Gastrocnemius medialis (tissue), 4 donors: ENCODE measurements at regions of chr5 and their contacts with region 1.

Region 1: DNA sequence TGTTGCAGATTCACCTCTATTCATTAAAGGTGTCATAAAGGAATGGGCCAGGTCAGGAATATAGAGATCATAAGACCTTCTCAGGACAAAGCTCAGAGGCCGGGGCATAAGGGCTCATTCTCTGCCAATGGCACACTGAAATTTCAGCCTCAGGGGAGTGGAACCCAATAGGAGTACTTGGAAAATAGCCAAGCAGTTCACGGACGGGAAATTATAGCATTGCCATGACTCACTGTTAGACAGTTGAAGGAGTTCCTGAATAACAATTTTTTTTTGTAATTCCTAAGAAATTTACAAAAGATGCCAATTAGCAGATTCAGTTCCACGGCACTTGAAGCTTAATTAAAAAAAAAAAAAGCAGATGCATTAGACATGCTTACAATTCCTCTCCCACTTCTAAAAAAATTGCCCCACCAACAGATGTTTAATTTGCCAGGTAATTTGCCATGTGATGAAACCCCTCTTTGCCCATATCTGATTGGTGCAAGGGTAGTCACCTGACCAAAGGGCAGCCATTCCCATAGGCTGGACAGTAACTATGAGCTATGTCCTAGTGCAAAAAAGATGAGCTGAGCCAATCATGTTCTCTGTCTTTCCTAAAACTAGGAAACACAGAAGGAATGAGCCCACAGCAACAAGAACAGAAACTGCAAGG is 58.6 kb downstream of the PTCD2 start:
- DNase-seq: peak; percentile 69 to 78
- ATAC-seq: peak; percentile 86 to 88
- H3K4me3 ChIP-seq: no peak overlapping the region
- H3K27ac ChIP-seq: peak overlapping the region; percentile 62 to 81 (median 76)
- H3K4me1 ChIP-seq: peaks cover 23 to 30% of the 10 kb centered on the region in 2 donors
- H3K27me3 ChIP-seq: no peaks in the 10 kb centered on the region
- CTCF ChIP-seq: no peak
- POLR2A ChIP-seq: no peak

Region 2: GRCh38 chr5:72441861-72442540 is 63.2 kb after region 1 on chr5:
- in situ Hi-C with region 1: loop called in 1 of 4 experiments (anchors 10 kb)
- intact Hi-C with region 1: no loop called
- DNase-seq: no peak
- ATAC-seq: peak; percentile 41 to 43
- H3K4me3 ChIP-seq: no peak overlapping the region
- H3K27ac ChIP-seq: peak overlapping the region; percentile 33 to 61 (median 46)
- H3K4me1 ChIP-seq: peaks cover 52 to 53% of the 10 kb centered on the region in 2 donors
- H3K27me3 ChIP-seq: no peaks in the 10 kb centered on the region
- CTCF ChIP-seq: no peak
- POLR2A ChIP-seq: no peak

Region 3: DNA sequence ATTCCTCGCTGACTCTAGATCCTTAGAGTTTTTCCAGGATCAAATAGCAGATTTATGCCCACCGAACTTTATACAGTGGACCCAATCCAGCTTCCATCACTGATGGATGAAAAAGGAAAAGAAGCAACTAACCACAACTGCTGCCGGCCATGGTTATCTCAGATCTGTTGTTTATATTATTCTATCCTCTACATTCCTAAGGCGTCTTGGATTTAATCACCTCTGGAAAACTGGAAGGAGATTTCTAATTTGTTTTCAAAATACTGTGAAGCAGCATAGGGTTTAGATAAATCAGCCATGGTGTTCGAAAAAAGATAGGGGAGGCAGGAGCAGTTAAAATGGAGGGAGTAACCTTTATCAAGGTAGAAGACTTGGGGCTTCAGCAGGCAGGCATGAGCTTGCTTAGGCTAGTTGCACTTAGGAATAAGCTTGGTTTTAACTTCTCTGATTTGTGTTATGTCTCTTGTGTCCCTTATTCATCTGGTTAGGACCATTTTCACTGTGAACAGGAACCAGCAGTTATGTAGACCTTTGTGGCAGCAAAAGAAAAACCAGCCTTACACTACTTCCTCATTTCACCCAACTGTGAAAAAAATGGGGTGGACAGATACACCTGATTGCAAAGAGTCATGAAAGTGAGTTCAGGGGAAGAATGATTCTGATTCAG is 129.3 kb after region 1 on chr5:
- in situ Hi-C with region 1: no loop called
- intact Hi-C with region 1: loop called (anchors 5 kb)
- DNase-seq: no peak
- ATAC-seq: no peak
- H3K4me3 ChIP-seq: peak overlapping the region in 1 of 4 donors; percentile 45
- H3K27ac ChIP-seq: peak overlapping the region; percentile 67 to 82 (median 76)
- H3K4me1 ChIP-seq: peaks cover 60 to 86% of the 10 kb centered on the region in 2 donors
- H3K27me3 ChIP-seq: no peaks in the 10 kb centered on the region
- CTCF ChIP-seq: no peak
- POLR2A ChIP-seq: no peak

Region 4: GRCh38 chr5:72624641-72625236 is 246.0 kb after region 1 on chr5:
- in situ Hi-C with region 1: no loop called
- intact Hi-C with region 1: loop called (anchors 5 kb)
- DNase-seq: peak; percentile 44 to 79
- ATAC-seq: peak; percentile 69 to 89
- H3K4me3 ChIP-seq: no peak overlapping the region
- H3K27ac ChIP-seq: peak overlapping the region; percentile 70 to 86 (median 78)
- H3K4me1 ChIP-seq: peaks cover 47 to 56% of the 10 kb centered on the region in 2 donors
- H3K27me3 ChIP-seq: no peaks in the 10 kb centered on the region
- CTCF ChIP-seq: no peak
- POLR2A ChIP-seq: no peak